RWPE1 (cell line): ENCODE measurements at regions of chr1 and their contacts with region 1.

Region 1: DNA sequence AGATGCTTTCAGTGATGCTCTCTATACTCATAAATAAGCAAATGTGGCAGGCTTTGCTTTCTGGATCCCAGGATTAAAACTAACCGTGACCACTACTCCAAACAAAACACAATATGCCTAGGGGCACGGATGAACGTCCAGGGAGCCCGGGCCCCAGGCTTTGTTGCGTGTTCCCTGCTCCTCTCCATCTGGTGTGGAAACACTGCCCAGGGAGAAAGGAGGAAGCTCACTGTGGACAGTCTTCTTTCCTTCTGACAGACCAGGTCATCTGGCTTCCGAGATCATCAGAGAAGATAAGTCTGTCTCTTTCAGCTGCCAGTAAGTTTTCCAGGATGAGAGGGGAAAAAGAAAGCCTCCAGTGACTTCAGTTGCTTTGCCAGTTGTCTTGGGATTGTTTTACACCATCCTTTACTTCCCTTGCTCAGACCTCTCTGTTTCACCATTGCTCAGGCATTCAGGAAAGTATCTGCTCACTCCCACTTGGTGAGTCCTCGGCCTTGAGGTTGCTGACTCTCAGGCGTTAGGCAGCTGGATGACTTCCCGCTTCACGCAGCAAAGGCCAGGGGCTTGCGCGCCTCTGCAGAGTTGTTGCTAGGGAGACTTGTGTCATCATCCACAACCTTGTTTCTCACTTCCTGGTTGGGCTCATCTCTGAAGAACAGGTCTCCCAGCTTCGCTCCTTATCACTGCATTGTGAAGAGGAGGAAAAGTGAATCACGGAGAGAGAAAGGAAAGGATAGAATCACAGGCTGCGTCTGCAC is 20.6 kb upstream of the PGD start:
- DNase-seq: no peak
- H3K27ac ChIP-seq: peak overlapping the region; percentile 46
- CTCF ChIP-seq: no peak

Region 2: DNA sequence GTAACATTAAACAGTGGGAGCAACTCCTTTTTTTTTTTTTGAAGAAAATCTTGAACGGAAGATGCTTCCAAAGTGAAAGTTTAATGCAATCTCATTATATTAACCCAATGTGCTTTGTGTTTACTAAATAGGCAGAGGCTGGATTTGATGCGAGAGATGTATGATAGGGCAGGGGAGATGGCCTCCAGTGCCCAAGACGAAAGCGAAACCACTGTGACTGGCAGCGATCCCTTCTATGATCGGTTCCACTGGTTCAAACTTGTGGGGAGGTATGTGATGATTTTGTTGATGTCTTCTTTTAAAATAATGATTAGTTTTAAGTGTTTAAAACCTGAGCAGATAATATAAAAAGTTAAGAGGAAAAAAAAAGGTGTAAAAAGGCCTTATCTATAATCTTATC is 53.6 kb before region 1 on chr1:
- CTCF ChIA-PET with region 1: no interaction called
- POLR2A ChIA-PET with region 1: no interaction called
- DNase-seq: no peak
- H3K27ac ChIP-seq: no peak overlapping the region
- CTCF ChIP-seq: no peak

Region 3: GRCh38 chr1:10398734-10399623 is 20.7 kb after region 1 on chr1 and contains the start of gene PGD:
- CTCF ChIA-PET with region 1: interaction called, 10 read pairs
- POLR2A ChIA-PET with region 1: no interaction called
- DNase-seq: peak; percentile 99
- H3K27ac ChIP-seq: peak within 1 kb of the TSS; percentile 95
- CTCF ChIP-seq: no peak